ENCODE measurements at regions of chr18 and their contacts with region 1.

Region 1: GRCh38 chr18:78645215-78645614 is 334.4 kb upstream of the SALL3 start:
- DNase-seq: no peak
- ATAC-seq: no peak

Region 2: GRCh38 chr18:78619854-78620253 is 25.4 kb before region 1 on chr18:
- intact Hi-C with region 1: loop called (anchors 2 kb)
- DNase-seq: no peak
- ATAC-seq: no peak